CD4-positive, alpha-beta T cell (primary cell): ENCODE measurements at regions of chr19 and their contacts with region 1.

Region 1: DNA sequence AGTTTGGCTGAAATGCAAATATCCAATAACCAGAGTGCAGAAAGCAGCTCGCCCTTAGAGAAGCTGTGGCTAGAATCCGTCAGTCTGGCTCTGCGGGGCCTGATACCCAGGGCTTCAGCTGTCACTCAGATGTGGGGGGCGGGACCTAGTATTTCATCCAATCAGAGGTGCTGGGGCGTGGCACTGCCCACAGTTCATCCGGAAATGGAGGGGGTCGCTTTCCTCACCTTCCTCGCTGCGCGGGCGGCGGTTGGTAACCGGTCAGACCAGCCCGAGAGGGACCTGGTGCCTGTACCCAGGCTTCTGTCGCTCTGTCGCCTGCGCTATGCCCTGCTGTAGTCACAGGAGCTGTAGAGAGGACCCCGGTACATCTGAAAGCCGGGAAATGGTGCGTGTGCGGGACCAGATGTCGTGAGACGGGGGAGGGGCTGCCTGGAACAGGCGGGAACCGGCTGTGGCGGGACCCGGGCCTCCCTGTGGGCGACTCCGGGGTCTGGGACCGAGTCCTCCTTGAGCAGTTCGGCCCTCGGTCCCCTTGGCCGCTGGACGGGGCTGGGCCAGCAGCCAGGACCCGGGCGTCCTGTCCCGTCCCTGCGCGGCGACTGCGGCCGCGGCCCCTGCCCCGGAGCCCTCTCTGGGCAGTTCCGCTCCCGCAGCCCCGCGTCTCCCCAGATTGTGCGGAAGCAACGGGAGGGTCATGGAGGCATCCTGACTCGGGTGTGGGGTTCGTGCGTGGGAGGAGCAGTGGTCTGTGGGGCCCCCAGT is at the start of gene ZNF700:
- DNase-seq: peak; percentile 82 to 94 (median 89)
- ATAC-seq: peak; percentile 86
- H3K4me3 ChIP-seq: peak within 1 kb of the TSS; percentile 96
- H3K4me3 Mint-ChIP-seq: peak within 1 kb of the TSS; percentile 98
- H3K27ac ChIP-seq: peak within 1 kb of the TSS; percentile 88 to 90
- H3K27ac Mint-ChIP-seq: peak within 1 kb of the TSS; percentile 96
- H3K4me1 ChIP-seq: peaks cover 43% of the 10 kb centered on the region
- H3K4me1 Mint-ChIP-seq: peaks cover 42% of the 10 kb centered on the region
- H3K27me3 ChIP-seq: no peaks in the 10 kb centered on the region
- H3K27me3 Mint-ChIP-seq: no peaks in the 10 kb centered on the region
- CTCF ChIP-seq: no peak
- total RNA-seq, gene ZNF700: 13.2 to 14.5 TPM

Region 2: DNA sequence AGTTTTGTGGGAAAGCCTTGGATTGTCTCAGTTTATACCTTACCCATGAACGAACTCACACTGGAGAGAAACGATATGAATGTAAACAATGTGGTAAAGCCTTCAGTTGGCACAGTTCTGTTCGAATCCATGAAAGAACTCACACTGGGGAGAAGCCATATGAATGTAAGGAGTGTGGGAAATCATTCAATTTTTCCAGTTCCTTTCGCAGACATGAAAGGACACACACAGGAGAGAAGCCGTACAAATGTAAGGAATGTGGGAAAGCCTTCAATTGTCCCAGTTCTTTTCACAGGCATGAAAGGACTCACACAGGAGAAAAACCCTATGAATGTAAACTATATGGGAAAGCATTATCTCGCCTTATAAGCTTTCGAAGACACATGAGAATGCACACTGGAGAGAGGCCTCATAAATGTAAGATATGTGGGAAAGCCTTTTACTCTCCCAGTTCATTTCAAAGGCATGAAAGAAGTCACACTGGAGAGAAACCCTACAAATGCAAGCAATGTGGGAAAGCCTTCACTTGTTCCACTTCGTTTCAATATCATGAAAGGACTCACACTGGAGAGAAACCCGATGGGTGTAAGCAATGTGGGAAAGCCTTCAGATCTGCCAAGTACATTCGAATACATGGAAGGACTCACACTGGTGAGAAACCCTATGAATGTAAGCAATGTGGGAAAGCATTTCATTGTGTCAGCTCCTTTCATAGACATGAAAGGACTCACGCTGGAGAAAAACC is 118.5 kb before region 1 on chr19:
- CTCF ChIA-PET with region 1: no interaction called
- POLR2A ChIA-PET with region 1: no interaction called
- intact Hi-C with region 1: no loop called
- DNase-seq: no peak
- ATAC-seq: no peak
- H3K4me3 ChIP-seq: no peak overlapping the region
- H3K4me3 Mint-ChIP-seq: no peak overlapping the region
- H3K27ac ChIP-seq: no peak overlapping the region
- H3K27ac Mint-ChIP-seq: no peak overlapping the region
- H3K4me1 ChIP-seq: no peaks in the 10 kb centered on the region
- H3K4me1 Mint-ChIP-seq: no peaks in the 10 kb centered on the region
- H3K27me3 ChIP-seq: no peaks in the 10 kb centered on the region
- H3K27me3 Mint-ChIP-seq: no peaks in the 10 kb centered on the region
- CTCF ChIP-seq: no peak

Region 3: DNA sequence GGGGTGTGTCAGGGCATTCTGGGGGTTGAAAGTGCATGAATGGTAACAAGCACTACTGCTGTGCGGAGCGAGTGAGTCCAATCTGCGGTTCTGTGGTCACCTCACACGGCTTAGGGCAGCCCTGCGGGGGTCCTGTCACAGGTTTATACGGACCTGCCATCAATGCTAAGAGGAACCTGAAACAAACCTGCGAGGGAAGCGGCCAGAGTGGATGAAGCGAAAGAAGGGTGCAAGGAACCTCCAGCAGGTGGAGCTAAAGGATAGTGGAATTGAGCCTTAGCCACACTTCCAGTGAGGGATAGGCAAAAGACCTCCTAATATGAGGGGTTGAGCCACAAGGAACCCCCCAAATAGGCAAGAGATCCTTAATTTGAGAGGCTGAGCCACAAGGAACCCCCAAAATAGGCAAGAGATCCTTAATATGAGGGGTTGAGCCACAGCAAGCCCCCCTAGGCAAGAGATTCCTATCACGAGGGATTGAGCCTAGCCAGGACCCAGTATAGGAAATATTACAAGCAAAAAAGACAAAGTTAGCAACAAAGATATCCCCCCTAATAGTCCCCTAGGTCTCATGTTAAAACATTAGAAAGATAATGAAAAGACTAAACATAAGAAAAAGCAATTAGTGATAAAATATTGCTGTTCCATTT is 43.8 kb before region 1 on chr19:
- CTCF ChIA-PET with region 1: interaction called, 7 read pairs
- POLR2A ChIA-PET with region 1: no interaction called
- intact Hi-C with region 1: loop called (anchors 1 to 2 kb)
- DNase-seq: peak; percentile 39 to 82 (median 54)
- ATAC-seq: peak; percentile 60
- H3K4me3 ChIP-seq: no peak overlapping the region
- H3K4me3 Mint-ChIP-seq: no peak overlapping the region
- H3K27ac ChIP-seq: no peak overlapping the region
- H3K27ac Mint-ChIP-seq: no peak overlapping the region
- H3K4me1 ChIP-seq: peaks cover 4% of the 10 kb centered on the region
- H3K4me1 Mint-ChIP-seq: no peaks in the 10 kb centered on the region
- H3K27me3 ChIP-seq: no peaks in the 10 kb centered on the region
- H3K27me3 Mint-ChIP-seq: no peaks in the 10 kb centered on the region
- CTCF ChIP-seq: peak; percentile 74

Region 4: DNA sequence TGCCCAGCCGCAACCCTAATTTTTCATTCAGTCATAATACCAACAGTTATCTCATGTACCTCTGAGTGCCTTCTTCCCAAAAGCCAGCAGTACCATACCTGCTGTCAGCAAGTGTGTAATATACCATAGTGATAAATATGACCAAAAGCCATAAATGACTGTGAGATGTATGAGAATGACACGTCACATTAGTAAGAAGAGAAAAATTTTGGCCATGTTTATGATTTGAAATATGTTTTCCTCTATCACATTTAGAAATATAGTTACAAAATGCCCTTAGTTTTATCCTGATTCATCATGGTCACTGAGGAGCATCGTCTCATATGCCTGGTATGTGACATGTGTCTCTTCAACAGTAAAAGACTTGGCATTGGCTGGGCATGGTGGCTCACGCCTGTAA is 11.4 kb before region 1 on chr19:
- CTCF ChIA-PET with region 1: no interaction called
- POLR2A ChIA-PET with region 1: no interaction called
- intact Hi-C with region 1: no loop called
- DNase-seq: no peak
- ATAC-seq: no peak
- H3K4me3 ChIP-seq: no peak overlapping the region
- H3K4me3 Mint-ChIP-seq: no peak overlapping the region
- H3K27ac ChIP-seq: no peak overlapping the region
- H3K27ac Mint-ChIP-seq: no peak overlapping the region
- H3K4me1 ChIP-seq: no peaks in the 10 kb centered on the region
- H3K4me1 Mint-ChIP-seq: no peaks in the 10 kb centered on the region
- H3K27me3 ChIP-seq: no peaks in the 10 kb centered on the region
- H3K27me3 Mint-ChIP-seq: no peaks in the 10 kb centered on the region
- CTCF ChIP-seq: no peak

Region 5: DNA sequence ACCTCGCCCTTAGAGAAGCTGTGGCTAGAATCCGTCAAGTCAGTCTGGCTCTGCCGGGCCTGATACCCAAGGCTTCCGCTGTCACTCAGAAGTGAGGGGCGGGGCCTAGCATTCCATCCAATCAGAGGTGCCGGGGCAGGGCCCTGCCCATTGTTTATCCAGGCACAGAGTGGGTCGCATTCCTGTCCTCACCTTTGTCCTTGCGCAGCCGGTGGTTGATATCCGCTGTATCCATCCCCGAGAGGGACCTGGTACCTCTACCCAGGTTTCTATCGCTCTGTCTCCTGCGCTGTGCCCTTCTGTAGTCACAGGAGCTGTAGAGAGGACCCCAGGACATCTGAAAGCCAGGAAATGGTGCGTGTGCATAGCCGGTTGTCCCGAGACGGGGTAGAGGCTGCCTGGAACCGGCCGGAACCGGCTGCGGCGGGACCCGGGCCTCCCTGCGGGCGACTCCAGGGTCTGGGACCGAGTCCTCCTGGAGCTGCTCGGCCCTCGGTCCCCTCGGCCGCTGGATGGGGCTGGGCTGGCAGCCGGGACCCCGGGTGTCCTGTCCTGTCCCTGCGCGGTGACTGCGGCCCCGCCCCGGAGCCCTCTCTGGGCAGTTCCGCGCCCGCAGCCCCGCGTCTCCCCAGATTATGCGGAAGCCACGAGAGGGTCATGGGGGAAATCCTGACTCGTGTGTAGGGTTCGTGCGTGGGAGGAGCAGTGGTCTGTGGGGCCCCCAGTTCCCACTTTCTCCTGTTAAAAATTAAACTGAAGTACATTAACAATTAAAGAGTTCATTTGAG is 40.0 kb after region 1 on chr19 and contains the start of gene ZNF763:
- CTCF ChIA-PET with region 1: interaction called, 25 read pairs
- POLR2A ChIA-PET with region 1: interaction called, 34 read pairs
- intact Hi-C with region 1: loop called (anchors 1 kb)
- DNase-seq: peak; percentile 80 to 95 (median 86)
- ATAC-seq: peak; percentile 93
- H3K4me3 ChIP-seq: peak within 1 kb of the TSS; percentile 67
- H3K4me3 Mint-ChIP-seq: peak within 1 kb of the TSS; percentile 95
- H3K27ac ChIP-seq: peak within 1 kb of the TSS; percentile 80 to 83
- H3K27ac Mint-ChIP-seq: peak within 1 kb of the TSS; percentile 88
- H3K4me1 ChIP-seq: peaks cover 28% of the 10 kb centered on the region
- H3K4me1 Mint-ChIP-seq: peaks cover 27% of the 10 kb centered on the region
- H3K27me3 ChIP-seq: no peaks in the 10 kb centered on the region
- H3K27me3 Mint-ChIP-seq: no peaks in the 10 kb centered on the region
- CTCF ChIP-seq: no peak
- total RNA-seq, gene ZNF763: 2.5 to 2.9 TPM

Region 6: DNA sequence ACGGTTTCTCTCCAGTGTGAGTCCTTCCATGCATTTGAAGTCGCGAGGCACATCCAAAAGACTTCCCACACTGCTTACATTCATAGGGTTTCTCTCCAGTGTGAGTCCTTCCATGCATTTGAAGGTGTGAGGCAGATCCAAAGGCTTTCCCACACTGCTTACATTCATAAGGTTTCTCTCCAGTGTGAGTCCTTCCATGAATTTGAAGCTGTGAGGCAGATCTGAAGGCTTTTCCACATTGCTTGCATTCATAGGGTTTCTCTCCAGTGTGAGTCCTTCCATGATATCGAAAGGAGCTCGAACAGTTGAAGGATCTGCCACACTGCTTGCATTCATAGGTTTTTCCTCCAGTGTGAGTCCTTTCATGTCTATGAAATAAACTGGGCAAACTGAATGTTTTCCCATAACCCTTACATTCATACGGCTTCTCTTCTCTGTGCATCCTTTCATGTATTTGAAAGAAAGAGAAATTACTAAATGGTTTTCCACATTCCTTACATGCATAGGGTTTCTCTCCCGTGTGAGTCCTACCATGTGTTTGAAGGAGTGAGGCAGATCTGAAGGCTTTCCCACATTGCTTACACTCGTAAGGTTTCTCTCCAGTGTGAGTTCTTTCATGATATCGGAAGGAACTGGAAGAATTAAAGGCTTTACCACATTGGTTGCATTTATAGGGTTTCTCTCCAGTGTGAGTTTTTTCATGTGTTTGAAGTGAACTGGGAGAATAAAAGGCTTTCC is 90.1 kb after region 1 on chr19:
- CTCF ChIA-PET with region 1: no interaction called
- POLR2A ChIA-PET with region 1: no interaction called
- intact Hi-C with region 1: no loop called
- DNase-seq: no peak
- ATAC-seq: no peak
- H3K4me3 ChIP-seq: no peak overlapping the region
- H3K4me3 Mint-ChIP-seq: no peak overlapping the region
- H3K27ac ChIP-seq: no peak overlapping the region
- H3K27ac Mint-ChIP-seq: no peak overlapping the region
- H3K4me1 ChIP-seq: no peaks in the 10 kb centered on the region
- H3K4me1 Mint-ChIP-seq: no peaks in the 10 kb centered on the region
- H3K27me3 ChIP-seq: no peaks in the 10 kb centered on the region
- H3K27me3 Mint-ChIP-seq: no peaks in the 10 kb centered on the region
- CTCF ChIP-seq: no peak

Region 7: DNA sequence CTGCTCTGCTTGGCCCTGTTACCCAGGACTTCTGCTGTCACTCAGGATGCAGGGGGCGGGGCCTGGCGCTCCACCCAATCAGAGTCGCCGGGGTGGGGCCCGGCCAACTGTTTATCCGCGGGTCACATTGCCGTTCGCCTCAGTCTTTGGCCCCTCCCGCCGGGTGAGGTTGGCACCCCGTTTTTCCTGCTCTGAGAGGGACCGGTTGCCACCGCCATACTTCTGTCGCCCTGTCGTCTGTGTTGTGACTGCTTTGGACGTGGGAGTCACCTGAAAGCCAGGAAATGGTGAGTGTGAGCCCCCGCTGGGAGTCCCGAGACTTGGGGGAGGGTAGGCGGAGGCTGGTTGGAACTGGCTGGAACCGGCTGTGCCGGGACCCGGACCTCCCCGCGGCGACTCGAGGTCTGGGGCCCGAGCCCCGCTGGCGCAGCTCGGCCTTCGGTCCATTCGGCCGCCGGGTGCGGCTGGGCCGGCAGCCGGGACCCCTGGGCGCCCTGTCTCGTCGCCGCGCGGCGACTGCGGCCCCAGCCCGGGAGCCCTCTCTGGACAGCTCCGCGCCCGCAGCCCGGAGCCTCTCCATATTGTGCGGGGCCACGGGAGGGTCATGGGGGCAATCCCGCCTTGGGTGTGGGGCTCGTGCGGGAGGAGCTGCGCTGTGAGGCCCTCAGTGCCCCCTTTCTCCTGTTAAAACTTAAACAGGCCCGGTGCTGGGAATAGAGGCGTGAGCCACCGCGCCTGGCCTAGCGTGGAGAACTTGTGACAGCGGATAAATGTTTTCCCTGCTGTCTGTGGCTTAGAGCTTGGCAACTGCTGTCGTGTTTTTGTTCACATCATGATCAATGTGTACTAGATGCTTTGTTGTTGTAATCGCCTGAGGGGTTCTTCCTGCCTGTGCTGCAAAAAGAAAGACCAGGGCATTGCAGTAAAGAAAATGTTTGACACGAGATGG is 139.8 kb after region 1 on chr19 and contains the start of gene ZNF844:
- CTCF ChIA-PET with region 1: interaction called, 20 read pairs
- POLR2A ChIA-PET with region 1: interaction called, 3 read pairs
- intact Hi-C with region 1: loop called in 1 of 2 experiments (anchors 2 kb)
- DNase-seq: peak; percentile 40 to 84 (median 62)
- ATAC-seq: peak; percentile 87
- H3K4me3 ChIP-seq: peak within 1 kb of the TSS; percentile 74
- H3K4me3 Mint-ChIP-seq: peak within 1 kb of the TSS; percentile 91
- H3K27ac ChIP-seq: peak within 1 kb of the TSS in 1 of 2 donors; percentile 46
- H3K27ac Mint-ChIP-seq: peak within 1 kb of the TSS; percentile 65
- H3K4me1 ChIP-seq: peaks cover 21% of the 10 kb centered on the region
- H3K4me1 Mint-ChIP-seq: peaks cover 5% of the 10 kb centered on the region
- H3K27me3 ChIP-seq: no peaks in the 10 kb centered on the region
- H3K27me3 Mint-ChIP-seq: no peaks in the 10 kb centered on the region
- CTCF ChIP-seq: no peak
- total RNA-seq, gene ZNF844: 22.2 to 23.7 TPM

Region 8: GRCh38 chr19:12095111-12095790 is 170.2 kb after region 1 on chr19:
- CTCF ChIA-PET with region 1: no interaction called
- POLR2A ChIA-PET with region 1: no interaction called
- intact Hi-C with region 1: no loop called
- DNase-seq: no peak
- ATAC-seq: no peak
- H3K4me3 ChIP-seq: no peak overlapping the region
- H3K4me3 Mint-ChIP-seq: no peak overlapping the region
- H3K27ac ChIP-seq: no peak overlapping the region
- H3K27ac Mint-ChIP-seq: no peak overlapping the region
- H3K4me1 ChIP-seq: peaks cover 13% of the 10 kb centered on the region
- H3K4me1 Mint-ChIP-seq: peaks cover 12% of the 10 kb centered on the region
- H3K27me3 ChIP-seq: no peaks in the 10 kb centered on the region
- H3K27me3 Mint-ChIP-seq: peaks cover 7% of the 10 kb centered on the region
- CTCF ChIP-seq: no peak

Region 9: DNA sequence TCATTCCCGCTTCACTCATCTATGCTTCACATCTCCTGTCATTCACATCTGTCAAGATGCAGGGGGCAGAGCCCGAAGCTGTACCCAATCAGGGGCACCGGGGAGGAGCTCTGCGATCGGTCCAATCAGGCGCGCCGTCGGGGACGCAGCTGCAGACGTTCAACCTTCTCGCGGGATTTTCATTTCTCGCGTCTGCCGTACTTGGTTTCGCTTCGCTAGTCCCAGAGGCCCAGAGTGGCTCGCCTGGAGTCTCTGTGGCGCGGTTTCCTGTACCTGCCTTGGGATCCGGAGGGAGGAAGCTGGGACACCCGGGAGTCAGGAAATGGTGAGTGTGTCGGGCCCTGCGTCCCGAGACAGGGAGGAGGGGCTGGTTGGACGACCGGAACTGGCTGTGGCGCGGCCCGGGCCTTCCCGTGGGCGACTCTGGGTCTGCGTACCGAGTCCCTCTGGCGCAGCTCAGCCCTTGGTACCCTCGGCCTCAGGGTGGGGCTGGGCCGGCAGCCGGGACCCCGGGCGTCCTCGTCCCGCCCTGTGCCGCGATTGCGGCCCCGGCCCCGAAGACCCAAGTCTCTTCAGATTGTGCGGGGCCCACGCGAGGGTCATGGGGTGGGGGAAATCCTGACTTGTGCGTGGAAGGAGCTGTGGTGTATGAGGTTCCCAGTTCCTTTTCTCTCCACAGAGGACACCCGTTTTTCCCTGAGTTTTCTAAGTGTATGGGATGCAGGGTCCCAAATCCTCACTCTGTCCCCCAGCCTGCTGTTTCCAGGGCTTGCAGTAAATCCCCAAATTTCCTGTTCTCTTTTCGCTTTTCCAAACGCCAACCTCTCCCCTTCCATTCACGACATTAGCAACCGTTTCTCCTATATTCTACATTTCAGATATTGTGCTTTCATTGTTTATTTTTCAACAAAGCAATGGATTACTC is 238.1 kb after region 1 on chr19 and contains the start of gene ZNF136:
- CTCF ChIA-PET with region 1: no interaction called
- POLR2A ChIA-PET with region 1: interaction called, 11 read pairs
- intact Hi-C with region 1: no loop called
- DNase-seq: peak; percentile 84 to 97 (median 90)
- ATAC-seq: peak; percentile 99
- H3K4me3 ChIP-seq: peak within 1 kb of the TSS; percentile 89
- H3K4me3 Mint-ChIP-seq: peak within 1 kb of the TSS; percentile 97
- H3K27ac ChIP-seq: peak within 1 kb of the TSS; percentile 88 to 96
- H3K27ac Mint-ChIP-seq: peak within 1 kb of the TSS; percentile 89
- H3K4me1 ChIP-seq: peaks cover 42% of the 10 kb centered on the region
- H3K4me1 Mint-ChIP-seq: peaks cover 50% of the 10 kb centered on the region
- H3K27me3 ChIP-seq: no peaks in the 10 kb centered on the region
- H3K27me3 Mint-ChIP-seq: no peaks in the 10 kb centered on the region
- CTCF ChIP-seq: no peak
- total RNA-seq, gene ZNF136: 40.5 to 45.6 TPM